ENCODE measurements at regions of chr11 and their contacts with region 1.

Region 1: GRCh38 chr11:134045782-134046635 is 22.9 kb upstream of the JAM3 start:
- DNase-seq: no peak
- H3K4me3 ChIP-seq: no peak overlapping the region
- CTCF ChIP-seq: peak; percentile 42

Region 2: GRCh38 chr11:134145715-134146114 is 99.7 kb after region 1 on chr11:
- in situ Hi-C with region 1: loop called (anchors 5 kb)
- DNase-seq: no peak
- H3K4me3 ChIP-seq: no peak overlapping the region
- CTCF ChIP-seq: no peak

Measured in astrocyte of the cerebellum (primary cell).